ENCODE measurements at regions of chr17 and their contacts with region 1.

Region 1: DNA sequence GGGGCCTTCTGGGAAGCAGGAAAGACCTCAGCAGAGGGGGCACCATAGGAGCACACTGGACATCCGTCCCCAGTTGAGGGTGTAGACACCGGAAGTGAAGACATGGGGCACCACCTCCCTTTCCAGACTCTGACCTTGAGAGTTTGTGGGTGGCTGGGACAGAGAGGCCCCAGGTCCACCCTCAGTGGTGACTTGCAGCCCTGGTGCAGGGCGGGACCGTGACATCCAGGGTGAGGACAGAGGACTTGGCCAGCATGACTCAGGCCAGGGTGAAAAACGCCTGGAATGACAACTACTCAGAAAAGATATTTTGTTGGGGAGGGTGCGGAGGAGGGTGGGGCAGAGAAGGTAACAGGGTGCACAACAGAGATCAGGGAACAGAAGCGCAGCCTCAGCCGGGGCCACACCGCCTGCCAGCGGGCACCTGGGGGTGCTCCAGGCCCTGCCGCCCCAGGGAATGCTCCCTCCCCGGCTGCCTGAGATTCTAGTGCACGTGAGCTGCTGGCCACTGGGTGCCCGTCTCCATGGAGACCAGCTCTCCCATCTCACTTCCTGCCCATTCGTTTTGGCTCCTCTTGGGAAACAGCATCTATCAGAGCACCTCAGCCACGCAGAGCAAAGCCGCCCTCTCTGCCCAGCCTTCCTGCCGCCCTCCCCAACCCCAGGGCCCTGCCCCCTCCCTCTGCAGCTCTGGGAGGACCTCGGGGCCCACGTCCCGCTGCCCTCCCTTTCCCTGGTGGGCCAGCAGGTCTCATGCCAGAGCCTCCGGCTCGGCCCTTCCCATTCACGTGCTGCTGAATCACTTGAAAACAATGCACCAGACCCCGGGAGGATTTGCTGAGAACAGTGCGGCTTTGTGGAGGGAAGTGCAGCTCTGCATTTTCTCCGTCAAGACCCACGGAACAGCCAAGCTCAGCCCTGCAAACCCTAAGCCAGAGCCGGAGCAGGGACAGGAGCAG is 19.6 kb downstream of the CEP295NL start:
- DNase-seq: peak; percentile 78
- H3K4me3 Mint-ChIP-seq: peak overlapping the region; percentile 58
- H3K27ac Mint-ChIP-seq: peak overlapping the region; percentile 91
- H3K4me1 Mint-ChIP-seq: peaks cover 21% of the 10 kb centered on the region
- H3K27me3 Mint-ChIP-seq: no peaks in the 10 kb centered on the region
- CTCF ChIP-seq: no peak

Region 2: GRCh38 chr17:78865682-78866390 is 17.6 kb before region 1 on chr17:
- CTCF ChIA-PET with region 1: interaction called, 6 read pairs
- POLR2A ChIA-PET with region 1: interaction called, 11 read pairs
- intact Hi-C with region 1: no loop called
- DNase-seq: peak; percentile 83
- H3K4me3 Mint-ChIP-seq: no peak overlapping the region
- H3K27ac Mint-ChIP-seq: no peak overlapping the region
- H3K4me1 Mint-ChIP-seq: peaks cover 29% of the 10 kb centered on the region
- H3K27me3 Mint-ChIP-seq: no peaks in the 10 kb centered on the region
- CTCF ChIP-seq: peak; percentile 91

Region 3: GRCh38 chr17:78925234-78925633 is 41.8 kb after region 1 on chr17 and contains the start of gene TIMP2:
- CTCF ChIA-PET with region 1: no interaction called
- POLR2A ChIA-PET with region 1: interaction called, 8 read pairs
- intact Hi-C with region 1: loop called (anchors 5 kb)
- DNase-seq: peak; percentile 66
- H3K4me3 Mint-ChIP-seq: peak within 1 kb of the TSS; percentile 73
- H3K27ac Mint-ChIP-seq: no peak within 1 kb of the TSS
- H3K4me1 Mint-ChIP-seq: peaks cover 12% of the 10 kb centered on the region
- H3K27me3 Mint-ChIP-seq: no peaks in the 10 kb centered on the region
- CTCF ChIP-seq: peak; percentile 25
- total RNA-seq, gene TIMP2: 24.8 and 35.1 TPM in 2 replicates

Measured in MCF 10A (cell line).